H1 (cell line): ENCODE measurements at regions of chr7 and their contacts with region 1.

Region 1: GRCh38 chr7:73578342-73579127 is at the start of gene TBL2:
- DNase-seq: peak; percentile 97 to 99
- H3K4me3 ChIP-seq: peak within 1 kb of the TSS; percentile 74 to 83 (median 79)
- H3K27ac ChIP-seq: no peak within 1 kb of the TSS; the same call in 1 of the 2 replicates
- H3K4me1 ChIP-seq: peaks cover 0 to 3% (median 0%) of the 10 kb centered on the region in 4 experiments; a peak in 2 of 7 replicates
- H3K27me3 ChIP-seq: peaks cover 0 to 16% (median 7%) of the 10 kb centered on the region in 4 experiments; a peak in 6 of 7 replicates
- CTCF ChIP-seq: no peak; a peak in 1 of 4 replicates
- EP300 ChIP-seq: no peak
- POLR2A ChIP-seq: peak; percentile 91 to 97
- RAD21 ChIP-seq: no peak
- total RNA-seq, gene TBL2: 22.5 and 25.8 TPM in 2 replicates

Region 2: GRCh38 chr7:73557108-73557396 is 21.5 kb before region 1 on chr7:
- CTCF ChIA-PET with region 1: interaction called, 5 read pairs
- POLR2A ChIA-PET with region 1: interaction called, 13 read pairs
- DNase-seq: peak; percentile 81 to 95
- H3K4me3 ChIP-seq: peak overlapping the region; percentile 68 to 87 (median 76)
- H3K27ac ChIP-seq: peak overlapping the region; percentile 99
- H3K4me1 ChIP-seq: peaks cover 0 to 3% (median 1%) of the 10 kb centered on the region in 4 experiments; a peak in 2 of 7 replicates
- H3K27me3 ChIP-seq: peaks cover 0 to 8% (median 1%) of the 10 kb centered on the region in 4 experiments; a peak in 4 of 7 replicates
- CTCF ChIP-seq: no peak
- EP300 ChIP-seq: no peak
- POLR2A ChIP-seq: 0 out of 3 replicates have a peak, but pooled peaks of 1 of the 2 experiments have one; percentile 7
- RAD21 ChIP-seq: no peak

Region 3: GRCh38 chr7:73565675-73566340 is 12.7 kb before region 1 on chr7:
- CTCF ChIA-PET with region 1: interaction called, 3 read pairs
- POLR2A ChIA-PET with region 1: interaction called, 39 read pairs
- DNase-seq: no peak
- H3K4me3 ChIP-seq: no peak overlapping the region
- H3K27ac ChIP-seq: no peak overlapping the region
- H3K4me1 ChIP-seq: peaks cover 0 to 2% (median 1%) of the 10 kb centered on the region in 4 experiments; a peak in 3 of 7 replicates
- H3K27me3 ChIP-seq: no peaks in the 10 kb centered on the region; a peak in 1 of 7 replicates
- CTCF ChIP-seq: no peak
- EP300 ChIP-seq: no peak
- POLR2A ChIP-seq: no peak
- RAD21 ChIP-seq: no peak

Region 4: GRCh38 chr7:73612598-73613269 is 34.2 kb after region 1 on chr7:
- CTCF ChIA-PET with region 1: no interaction called
- POLR2A ChIA-PET with region 1: no interaction called
- DNase-seq: no peak
- H3K4me3 ChIP-seq: no peak overlapping the region
- H3K27ac ChIP-seq: no peak overlapping the region
- H3K4me1 ChIP-seq: peaks cover 0 to 3% (median 0%) of the 10 kb centered on the region in 4 experiments; a peak in 1 of 7 replicates
- H3K27me3 ChIP-seq: no peaks in the 10 kb centered on the region; a peak in 1 of 7 replicates
- CTCF ChIP-seq: peak in 2 of 3 experiments; percentile 17 to 41; a peak in 2 of 4 replicates
- EP300 ChIP-seq: no peak
- POLR2A ChIP-seq: no peak
- RAD21 ChIP-seq: peak; percentile 49 to 60

Region 5: GRCh38 chr7:73638911-73639310 is 60.4 kb after region 1 on chr7:
- CTCF ChIA-PET with region 1: no interaction called
- POLR2A ChIA-PET with region 1: no interaction called
- DNase-seq: no peak
- H3K4me3 ChIP-seq: no peak overlapping the region
- H3K27ac ChIP-seq: no peak overlapping the region
- H3K4me1 ChIP-seq: peaks cover 0 to 6% (median 0%) of the 10 kb centered on the region in 4 experiments; a peak in 2 of 7 replicates
- H3K27me3 ChIP-seq: no peaks in the 10 kb centered on the region
- CTCF ChIP-seq: no peak
- EP300 ChIP-seq: no peak
- POLR2A ChIP-seq: no peak
- RAD21 ChIP-seq: no peak